ENCODE measurements at regions of chr1 and their contacts with region 1.

Region 1: GRCh38 chr1:234499119-234499942 is 20.4 kb upstream of the TARBP1 start:
- DNase-seq: peak; percentile 65
- ATAC-seq: peak; percentile 99
- H3K4me3 ChIP-seq: 0 out of 6 replicates have a peak overlapping the region, but pooled peaks of 1 of the 3 experiments have one; percentile 8
- H3K27ac ChIP-seq: peak overlapping the region; percentile 50
- H3K4me1 ChIP-seq: peaks cover 61% of the 10 kb centered on the region
- H3K27me3 ChIP-seq: no peaks in the 10 kb centered on the region
- CTCF ChIP-seq: peak; percentile 97
- EP300 ChIP-seq: no peak
- POLR2A ChIP-seq: no peak
- RAD21 ChIP-seq: peak; percentile 99

Region 2: GRCh38 chr1:234564642-234565037 is 65.3 kb after region 1 on chr1:
- CTCF ChIA-PET with region 1: no interaction called
- POLR2A ChIA-PET with region 1: no interaction called
- in situ Hi-C with region 1: no loop called
- intact Hi-C with region 1: loop called (anchors 5 kb)
- DNase-seq: peak; percentile 66
- ATAC-seq: peak; percentile 59
- H3K4me3 ChIP-seq: no peak overlapping the region
- H3K27ac ChIP-seq: no peak overlapping the region
- H3K4me1 ChIP-seq: peaks cover 50% of the 10 kb centered on the region
- H3K27me3 ChIP-seq: no peaks in the 10 kb centered on the region
- CTCF ChIP-seq: no peak
- EP300 ChIP-seq: no peak
- POLR2A ChIP-seq: no peak
- RAD21 ChIP-seq: no peak

Region 3: DNA sequence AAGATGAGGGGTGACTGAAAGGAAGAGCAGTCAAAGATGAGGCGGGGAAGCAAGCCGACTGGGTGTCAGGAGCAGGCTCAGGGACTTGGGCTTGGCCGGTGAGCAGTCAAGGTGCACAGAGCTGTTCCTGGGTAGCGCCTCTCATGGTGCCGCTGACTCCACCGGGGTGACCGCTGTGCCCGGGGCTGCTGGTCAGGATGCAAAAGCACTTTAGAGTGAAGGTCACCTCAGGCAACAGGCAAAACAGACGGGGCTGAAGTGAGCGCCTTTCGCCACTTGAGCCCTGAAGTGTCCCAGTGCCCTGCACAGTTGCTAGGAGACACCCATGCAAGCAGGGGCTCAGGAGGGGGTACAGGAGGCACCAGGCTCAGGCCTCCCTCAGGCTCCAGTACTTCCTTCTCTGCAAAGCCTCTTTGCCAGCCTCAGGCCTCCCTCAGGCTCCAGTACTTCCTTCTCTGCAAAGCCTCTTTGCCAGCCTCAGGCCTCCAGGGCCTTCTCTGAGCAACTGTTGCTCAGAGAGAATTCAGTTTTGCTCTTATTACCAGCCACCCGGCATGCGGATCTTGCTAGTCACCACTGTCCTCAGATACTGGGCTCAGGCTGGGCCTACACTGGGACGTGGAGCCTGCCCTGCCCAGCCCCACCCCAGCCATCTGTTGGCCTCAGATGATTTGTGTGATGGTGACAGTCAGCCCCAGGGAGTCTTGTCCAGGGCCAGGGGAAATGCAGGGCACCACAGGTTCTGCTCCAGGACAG is 210.3 kb after region 1 on chr1:
- CTCF ChIA-PET with region 1: no interaction called
- POLR2A ChIA-PET with region 1: no interaction called
- in situ Hi-C with region 1: loop called (anchors 10 kb)
- intact Hi-C with region 1: no loop called
- DNase-seq: no peak
- ATAC-seq: peak; percentile 32
- H3K4me3 ChIP-seq: no peak overlapping the region
- H3K27ac ChIP-seq: no peak overlapping the region
- H3K4me1 ChIP-seq: peaks cover 49% of the 10 kb centered on the region
- H3K27me3 ChIP-seq: no peaks in the 10 kb centered on the region
- CTCF ChIP-seq: no peak
- EP300 ChIP-seq: no peak
- POLR2A ChIP-seq: no peak
- RAD21 ChIP-seq: no peak

Region 4: GRCh38 chr1:234825498-234826165 is 326.3 kb after region 1 on chr1:
- CTCF ChIA-PET with region 1: no interaction called
- POLR2A ChIA-PET with region 1: no interaction called
- in situ Hi-C with region 1: no loop called
- intact Hi-C with region 1: no loop called
- DNase-seq: no peak
- ATAC-seq: no peak
- H3K4me3 ChIP-seq: no peak overlapping the region
- H3K27ac ChIP-seq: no peak overlapping the region
- H3K4me1 ChIP-seq: peaks cover 17% of the 10 kb centered on the region
- H3K27me3 ChIP-seq: no peaks in the 10 kb centered on the region
- CTCF ChIP-seq: no peak
- EP300 ChIP-seq: no peak
- POLR2A ChIP-seq: no peak
- RAD21 ChIP-seq: no peak

Region 5: DNA sequence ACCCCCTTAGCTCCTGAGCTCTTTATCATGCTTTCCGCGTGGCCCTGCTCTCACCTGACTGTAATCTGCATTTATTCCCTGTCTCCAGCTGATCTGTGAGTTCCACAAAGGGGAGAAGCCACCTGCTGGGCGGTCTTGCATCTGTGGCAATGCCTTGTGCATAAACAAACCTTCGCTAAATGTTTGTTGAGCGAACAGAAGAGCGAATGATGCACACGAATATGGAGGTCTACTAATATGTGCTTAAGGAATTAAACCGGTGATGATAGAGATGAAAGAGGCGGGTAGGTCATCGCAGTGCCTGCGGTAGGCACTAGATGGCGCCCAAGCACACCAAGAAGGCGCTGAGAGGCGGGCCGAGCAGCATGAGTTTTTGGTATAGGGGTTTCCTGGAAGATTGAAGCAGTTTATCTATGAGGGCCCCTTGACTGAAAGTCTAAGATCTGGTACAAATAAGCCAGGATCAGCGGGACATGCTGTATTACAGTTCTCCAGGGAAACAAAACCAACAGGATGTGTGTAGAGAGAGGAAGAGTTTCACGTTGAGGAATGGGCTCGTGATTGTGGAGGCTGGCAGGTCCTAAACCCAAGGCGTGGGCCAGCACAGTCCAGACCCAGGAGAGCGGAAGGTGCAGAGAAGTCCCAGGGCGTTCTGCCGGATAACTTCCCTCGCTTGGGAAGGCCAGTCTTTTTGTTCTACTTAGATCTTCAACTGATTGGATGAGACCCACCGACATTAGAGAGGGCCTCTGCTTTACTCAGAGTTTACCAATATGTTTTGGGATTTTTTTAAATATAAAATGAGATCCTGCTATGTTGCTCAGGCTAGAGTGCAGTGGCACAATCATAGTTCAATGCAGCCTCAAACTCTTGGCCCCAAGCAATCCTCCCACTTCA is 594.6 kb after region 1 on chr1:
- CTCF ChIA-PET with region 1: interaction called, 3 read pairs
- POLR2A ChIA-PET with region 1: no interaction called
- in situ Hi-C with region 1: loop called (anchors 5 kb)
- intact Hi-C with region 1: no loop called
- DNase-seq: peak; percentile 51
- ATAC-seq: peak; percentile 75
- H3K4me3 ChIP-seq: peak overlapping the region in 1 of 3 experiments; percentile 41; a peak in 1 of 6 replicates
- H3K27ac ChIP-seq: no peak overlapping the region
- H3K4me1 ChIP-seq: peaks cover 60% of the 10 kb centered on the region
- H3K27me3 ChIP-seq: no peaks in the 10 kb centered on the region
- CTCF ChIP-seq: peak; percentile 88
- EP300 ChIP-seq: no peak
- POLR2A ChIP-seq: no peak
- RAD21 ChIP-seq: peak; percentile 64